ENCODE measurements at regions of chr16 and their contacts with region 1.

Region 1: GRCh38 chr16:3282730-3283524 is at the start of gene ZNF263:
- DNase-seq: peak; percentile 96 to 98 (median 96)
- ATAC-seq: peak; percentile 96 to 98 (median 96)
- H3K4me3 ChIP-seq: peak within 1 kb of the TSS; percentile 75 to 99 (median 94)
- H3K27ac ChIP-seq: peak within 1 kb of the TSS; percentile 98 to 100 (median 99)
- H3K4me1 ChIP-seq: peaks cover 0 to 30% (median 24%) of the 10 kb centered on the region in 12 donors
- H3K27me3 ChIP-seq: no peaks in the 10 kb centered on the region
- CTCF ChIP-seq: no peak
- POLR2A ChIP-seq: no peak
- total RNA-seq, gene ZNF263: 6.4 to 18.7 (median 9.6) TPM

Region 2: DNA sequence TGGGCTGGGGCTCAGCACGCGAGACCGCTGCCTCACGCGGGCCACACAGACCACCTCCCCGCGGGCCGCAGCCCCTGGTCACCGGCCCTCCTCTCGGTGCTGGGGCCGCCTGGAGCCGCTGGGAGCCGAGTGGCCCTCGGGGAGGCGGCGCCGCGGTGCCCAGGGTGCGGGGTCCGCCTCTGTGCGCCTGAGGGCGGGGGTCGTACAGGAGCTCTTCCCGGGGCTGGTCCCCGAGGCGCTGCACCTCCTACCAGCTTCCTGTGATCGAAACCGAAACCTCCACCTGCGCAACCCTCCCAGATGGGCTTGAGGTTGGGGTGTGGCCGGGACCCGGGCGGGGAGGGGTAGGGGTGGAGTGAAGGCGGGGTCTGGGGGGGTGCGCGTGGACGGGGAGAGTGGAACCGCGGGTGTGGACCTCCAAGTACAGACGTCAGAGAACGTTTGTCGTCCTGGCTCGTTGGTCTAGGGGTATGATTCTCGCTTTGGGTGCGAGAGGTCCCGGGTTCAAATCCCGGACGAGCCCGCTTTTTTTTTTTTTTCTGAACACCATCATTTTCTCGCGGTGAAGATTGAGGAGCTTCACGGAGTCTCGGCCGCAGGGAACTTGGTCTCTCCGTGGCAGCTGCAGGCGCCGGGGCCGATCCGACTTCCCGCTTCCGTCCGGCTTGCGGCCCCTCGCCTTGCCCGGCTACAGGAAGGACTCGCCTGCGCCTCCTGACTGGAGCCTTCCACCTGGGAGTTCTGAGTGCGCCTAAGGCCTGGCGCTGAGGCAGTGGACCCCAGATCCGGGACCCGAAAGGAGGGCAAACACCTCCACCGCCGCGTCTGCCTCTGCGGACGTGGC is 124.2 kb before region 1 on chr16:
- intact Hi-C with region 1: loop called in 1 of 10 experiments (anchors 5 kb)
- DNase-seq: peak; percentile 82 to 92 (median 88)
- ATAC-seq: peak; percentile 80 to 91 (median 88)
- H3K4me3 ChIP-seq: peak overlapping the region; percentile 47 to 84 (median 73)
- H3K27ac ChIP-seq: peak overlapping the region; percentile 81 to 94 (median 88)
- H3K4me1 ChIP-seq: peaks cover 0 to 25% (median 12%) of the 10 kb centered on the region in 12 donors
- H3K27me3 ChIP-seq: peaks cover 0 to 4% (median 0%) of the 10 kb centered on the region in 9 donors
- CTCF ChIP-seq: peak in 1 of 12 donors; percentile 14
- POLR2A ChIP-seq: no peak

Region 3: DNA sequence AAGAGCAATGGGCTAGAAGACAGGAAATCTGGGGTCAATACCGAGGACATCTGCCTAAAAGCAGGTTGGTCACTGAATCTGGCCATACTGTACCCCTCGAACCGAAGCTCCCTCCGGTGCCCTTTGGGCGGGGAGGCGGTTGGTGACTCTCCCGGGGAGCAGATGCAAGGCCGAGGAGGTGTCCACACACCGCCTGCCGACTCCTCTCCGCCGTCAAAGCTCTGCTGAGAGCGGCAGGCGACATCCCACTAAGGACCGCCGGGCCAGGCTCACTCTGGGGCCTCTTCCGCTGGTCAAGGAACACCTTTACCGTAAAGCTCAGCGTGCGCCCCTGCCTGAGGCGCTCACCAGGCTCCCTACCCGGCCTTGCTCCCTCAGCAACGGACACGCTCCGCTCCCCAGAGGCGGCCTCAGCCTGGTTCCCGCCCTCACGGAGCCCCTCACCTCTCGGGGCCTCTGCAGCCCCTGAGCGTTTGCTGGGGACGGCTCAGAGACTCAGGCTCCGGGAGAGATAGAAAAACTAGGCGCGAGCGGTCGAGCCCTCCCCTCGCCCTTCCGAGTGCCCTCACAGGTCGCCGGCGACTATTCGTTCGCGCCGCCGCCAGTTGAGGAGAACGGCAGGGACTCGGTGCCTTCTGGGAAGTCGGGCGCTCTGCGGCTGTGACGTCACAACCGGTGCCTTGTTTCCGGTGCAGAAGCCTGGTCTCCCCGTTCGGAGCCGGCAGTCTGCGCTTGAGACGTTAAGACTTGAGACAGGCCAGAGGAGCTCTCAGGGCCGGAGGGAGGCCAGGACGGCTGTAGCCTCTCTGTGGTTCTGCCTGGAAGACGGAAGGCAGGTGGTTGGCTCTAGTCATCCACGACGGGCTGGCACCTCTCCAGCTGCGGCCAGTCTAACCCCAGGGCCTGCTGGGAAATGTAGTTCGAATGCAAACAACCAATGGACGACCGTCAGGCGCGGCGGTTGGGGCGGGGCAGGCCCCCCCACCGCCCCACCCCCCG is 48.1 kb before region 1 on chr16 and contains the start of gene ZNF200:
- intact Hi-C with region 1: loop called in 2 of 10 experiments (anchors 1 to 10 kb)
- DNase-seq: peak; percentile 97 to 99 (median 98)
- ATAC-seq: peak; percentile 99
- H3K4me3 ChIP-seq: peak within 1 kb of the TSS; percentile 79 to 99 (median 90)
- H3K27ac ChIP-seq: peak within 1 kb of the TSS; percentile 88 to 100 (median 98)
- H3K4me1 ChIP-seq: peaks cover 0 to 18% (median 13%) of the 10 kb centered on the region in 12 donors
- H3K27me3 ChIP-seq: no peaks in the 10 kb centered on the region
- CTCF ChIP-seq: no peak
- POLR2A ChIP-seq: peak in 1 of 2 donors; percentile 75
- total RNA-seq, gene ZNF200: 4.8 to 8.7 (median 6.5) TPM

Region 4: DNA sequence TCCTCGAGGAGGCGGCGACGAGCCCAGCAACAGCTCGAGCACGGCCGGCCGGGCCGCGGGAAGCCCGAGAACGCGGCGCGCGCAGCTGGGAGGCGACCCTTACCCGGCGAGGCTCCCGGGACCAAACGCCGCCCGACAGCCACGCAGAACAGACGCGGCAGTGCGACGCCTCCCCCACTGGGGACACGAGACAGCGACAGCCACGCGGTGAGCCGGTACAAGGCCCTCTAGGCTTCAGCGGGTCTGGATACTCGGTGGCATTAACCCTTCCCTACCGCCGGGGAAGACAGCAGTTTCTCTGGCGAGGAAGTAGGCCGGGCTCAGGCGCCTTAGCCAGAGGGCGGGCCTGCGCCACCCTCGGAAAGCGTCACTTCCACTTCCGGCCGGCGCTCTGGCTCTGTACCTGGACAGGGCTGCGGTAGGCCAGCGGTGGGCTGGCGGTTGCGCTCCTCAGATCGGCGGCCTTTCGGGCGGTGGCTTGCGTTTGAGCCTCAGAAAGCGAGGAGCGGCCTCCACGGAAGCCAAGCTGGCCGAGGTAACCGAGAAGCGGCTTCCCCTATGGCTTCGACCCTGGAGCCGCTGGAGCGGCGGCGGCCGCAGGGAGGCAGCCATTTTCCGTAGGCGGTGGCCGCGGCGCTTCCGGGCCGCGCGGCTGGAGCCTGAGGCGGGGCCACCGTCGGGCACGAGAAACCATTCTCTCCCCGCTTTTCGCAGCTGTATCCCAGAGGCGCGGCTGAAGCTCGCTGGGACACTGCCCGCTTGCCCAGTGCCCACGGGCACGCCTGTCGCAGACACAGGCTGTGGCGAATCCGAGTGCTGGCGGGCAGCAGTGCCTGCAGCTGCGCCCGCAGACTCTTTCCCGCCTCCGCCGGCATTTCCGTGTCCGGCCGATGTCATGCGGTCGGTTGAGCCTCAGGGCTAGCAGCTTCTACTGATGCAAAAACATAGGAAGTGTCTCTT is 22.5 kb after region 1 on chr16 and contains the starts of genes TIGD7 and ZNF75A:
- intact Hi-C with region 1: loop called in 2 of 10 experiments (anchors 1 to 2 kb)
- DNase-seq: peak; percentile 89 to 93 (median 92)
- ATAC-seq: peak; percentile 98 to 100 (median 99)
- H3K4me3 ChIP-seq: peak within 1 kb of the TSS; percentile 52 to 92 (median 73)
- H3K27ac ChIP-seq: peak within 1 kb of the TSS; percentile 74 to 98 (median 94)
- H3K4me1 ChIP-seq: peaks cover 0 to 25% (median 18%) of the 10 kb centered on the region in 12 donors
- H3K27me3 ChIP-seq: no peaks in the 10 kb centered on the region
- CTCF ChIP-seq: peak in 7 of 12 donors; percentile 5 to 45 (median 23)
- POLR2A ChIP-seq: peak in 1 of 2 donors; percentile 80
- total RNA-seq, gene TIGD7: 4.6 to 10.4 (median 8.2) TPM
- total RNA-seq, gene ZNF75A: 13.3 to 27.3 (median 18.1) TPM

Region 5: DNA sequence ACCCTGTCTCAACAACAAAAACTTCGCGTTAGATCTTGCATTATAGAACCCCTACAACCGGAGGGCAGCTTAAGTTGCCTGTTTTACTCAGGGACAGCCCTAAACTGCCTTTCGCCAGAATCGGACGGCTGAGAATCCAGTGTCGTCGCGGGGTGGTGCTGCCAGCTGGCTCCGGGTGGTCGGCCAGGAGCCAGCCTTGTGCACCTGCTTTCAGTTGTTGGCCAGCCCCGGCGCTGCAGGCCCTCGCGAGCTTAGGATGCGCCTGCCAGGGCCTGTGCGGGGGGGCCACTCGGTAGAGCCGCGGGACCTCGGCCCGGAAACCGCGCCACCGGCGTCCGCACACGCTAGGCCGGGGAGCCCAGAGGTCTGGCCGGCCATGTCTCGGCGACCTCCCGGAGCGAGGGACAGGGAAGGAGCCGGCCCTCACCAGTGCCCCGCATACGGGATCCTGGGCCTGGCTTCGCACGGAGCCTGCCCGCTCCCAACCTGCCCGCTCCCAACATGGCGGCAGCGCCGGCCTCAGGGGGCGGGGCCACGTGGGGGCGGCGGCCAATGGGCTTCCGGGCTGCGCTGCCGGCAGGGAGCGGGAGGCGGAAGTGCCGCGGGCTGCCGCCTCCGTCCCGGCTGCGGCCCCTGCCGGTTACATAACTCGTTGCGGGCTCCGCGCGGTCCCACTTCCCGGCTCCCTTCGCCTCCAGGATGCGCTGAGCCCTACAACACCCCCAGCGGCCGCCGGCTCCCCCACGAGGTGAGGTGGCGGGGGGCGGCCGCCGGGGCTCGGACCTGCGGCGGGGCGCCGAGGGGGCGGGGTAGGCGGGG is 174.7 kb after region 1 on chr16:
- intact Hi-C with region 1: loop called in 3 of 10 experiments (anchors 5 to 10 kb)
- DNase-seq: peak; percentile 91 to 95 (median 93)
- ATAC-seq: peak; percentile 69 to 94 (median 90)
- H3K4me3 ChIP-seq: peak overlapping the region; percentile 74 to 99 (median 80)
- H3K27ac ChIP-seq: peak overlapping the region; percentile 94 to 99 (median 98)
- H3K4me1 ChIP-seq: peaks cover 16 to 64% (median 57%) of the 10 kb centered on the region in 12 donors
- H3K27me3 ChIP-seq: no peaks in the 10 kb centered on the region
- CTCF ChIP-seq: peak in 11 of 12 donors; percentile 24 to 64 (median 50)
- POLR2A ChIP-seq: peak in 1 of 2 donors; percentile 56

Region 6: DNA sequence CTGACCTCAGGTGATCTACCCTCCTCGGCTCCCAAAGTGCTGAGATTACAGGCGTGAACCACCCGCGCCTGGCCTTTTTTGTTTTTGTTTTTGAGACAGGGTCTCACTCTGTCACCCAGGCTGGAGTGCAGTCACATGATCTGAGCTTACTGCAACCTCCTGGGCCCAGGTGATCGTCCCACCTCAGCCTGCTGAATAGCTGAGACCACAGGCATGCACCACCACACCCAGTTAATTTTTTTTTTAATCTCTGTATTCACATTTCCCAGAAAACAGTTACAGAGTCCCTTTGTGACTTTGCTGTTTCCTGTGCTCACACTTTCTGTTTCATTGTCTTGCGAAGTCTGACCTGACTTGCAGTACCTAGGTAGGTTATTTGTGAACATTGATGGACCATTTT is 220.6 kb after region 1 on chr16:
- intact Hi-C with region 1: loop called in 3 of 10 experiments (anchors 5 to 10 kb)
- DNase-seq: no peak
- ATAC-seq: no peak
- H3K4me3 ChIP-seq: no peak overlapping the region
- H3K27ac ChIP-seq: peak overlapping the region in 1 of 12 donors; percentile 74
- H3K4me1 ChIP-seq: peaks cover 4 to 37% (median 14%) of the 10 kb centered on the region in 12 donors
- H3K27me3 ChIP-seq: no peaks in the 10 kb centered on the region
- CTCF ChIP-seq: no peak
- POLR2A ChIP-seq: no peak

Region 7: GRCh38 chr16:3509470-3509928 is 226.6 kb after region 1 on chr16:
- intact Hi-C with region 1: loop called in 3 of 10 experiments (anchors 5 to 10 kb)
- DNase-seq: no peak
- ATAC-seq: no peak
- H3K4me3 ChIP-seq: no peak overlapping the region
- H3K27ac ChIP-seq: peak overlapping the region in 1 of 12 donors; percentile 42
- H3K4me1 ChIP-seq: peaks cover 0 to 10% (median 0%) of the 10 kb centered on the region in 12 donors
- H3K27me3 ChIP-seq: no peaks in the 10 kb centered on the region
- CTCF ChIP-seq: no peak
- POLR2A ChIP-seq: no peak

Measured in heart left ventricle (tissue), 16 donors.